PC-9 (cell line): ENCODE measurements at regions of chr1 and their contacts with region 1.

Region 1: DNA sequence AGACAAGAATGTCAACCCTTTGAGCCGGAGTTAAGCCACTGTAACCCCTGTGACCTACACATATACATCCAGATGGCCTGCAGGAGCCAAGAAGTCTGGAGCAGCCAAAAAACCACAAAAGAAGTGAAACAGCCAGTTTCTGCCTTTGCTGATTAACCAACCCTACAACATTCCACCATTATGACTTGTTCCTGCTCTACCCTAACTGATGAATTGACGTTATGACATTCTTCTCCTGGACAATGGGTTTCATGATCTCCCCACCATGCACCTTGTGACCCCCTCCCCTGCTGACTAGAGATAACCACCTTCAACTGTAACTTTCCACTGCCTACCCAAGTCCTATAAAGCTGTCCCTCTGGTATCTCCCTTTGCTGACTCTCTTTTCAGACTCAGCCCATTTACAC is 216.3 kb upstream of the DUSP10 start:
- DNase-seq: peak; percentile 85 to 99
- H3K4me3 ChIP-seq: 0 out of 2 replicates have a peak overlapping the region, but pooled peaks have one; percentile 11
- H3K27ac ChIP-seq: peak overlapping the region; percentile 95
- H3K4me1 ChIP-seq: peaks cover 61% of the 10 kb centered on the region
- H3K27me3 ChIP-seq: no peaks in the 10 kb centered on the region
- CTCF ChIP-seq: no peak

Region 2: GRCh38 chr1:221478050-221478949 is 479.9 kb before region 1 on chr1:
- CTCF ChIA-PET with region 1: no interaction called
- POLR2A ChIA-PET with region 1: no interaction called
- intact Hi-C with region 1: loop called (anchors 5 kb)
- DNase-seq: peak; percentile 74 to 80
- H3K4me3 ChIP-seq: no peak overlapping the region
- H3K27ac ChIP-seq: no peak overlapping the region
- H3K4me1 ChIP-seq: peaks cover 13% of the 10 kb centered on the region
- H3K27me3 ChIP-seq: no peaks in the 10 kb centered on the region
- CTCF ChIP-seq: peak; percentile 79

Region 3: GRCh38 chr1:221809031-221810029 is 148.8 kb before region 1 on chr1:
- CTCF ChIA-PET with region 1: no interaction called
- POLR2A ChIA-PET with region 1: interaction called, 3 read pairs
- intact Hi-C with region 1: loop called (anchors 2 kb)
- DNase-seq: no peak
- H3K4me3 ChIP-seq: no peak overlapping the region
- H3K27ac ChIP-seq: peak overlapping the region; percentile 90
- H3K4me1 ChIP-seq: peaks cover 59% of the 10 kb centered on the region
- H3K27me3 ChIP-seq: no peaks in the 10 kb centered on the region
- CTCF ChIP-seq: no peak

Region 4: DNA sequence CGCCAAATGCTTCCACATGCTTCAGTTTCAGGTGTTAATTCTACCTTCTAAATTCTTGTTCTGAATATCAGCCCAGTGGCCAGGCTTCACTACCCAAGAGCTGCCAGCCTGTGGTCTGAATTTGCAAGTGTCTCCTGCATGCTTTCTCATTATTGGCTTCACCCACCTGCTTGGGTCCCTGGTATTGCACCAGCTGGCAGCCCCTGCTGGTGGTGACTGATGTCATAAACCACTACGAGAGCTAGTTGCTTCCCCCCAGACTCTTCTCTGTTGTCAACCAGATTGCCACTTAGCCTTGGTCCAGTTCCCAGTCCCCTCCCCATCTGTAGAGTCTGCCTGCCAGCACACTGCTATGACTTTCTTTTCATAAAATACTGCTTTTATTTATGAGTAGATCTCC is 18.6 kb before region 1 on chr1:
- CTCF ChIA-PET with region 1: no interaction called
- POLR2A ChIA-PET with region 1: no interaction called
- intact Hi-C with region 1: no loop called
- DNase-seq: no peak
- H3K4me3 ChIP-seq: no peak overlapping the region
- H3K27ac ChIP-seq: no peak overlapping the region
- H3K4me1 ChIP-seq: no peaks in the 10 kb centered on the region
- H3K27me3 ChIP-seq: no peaks in the 10 kb centered on the region
- CTCF ChIP-seq: no peak

Region 5: GRCh38 chr1:221987860-221988520 is 29.8 kb after region 1 on chr1:
- CTCF ChIA-PET with region 1: interaction called, 3 read pairs
- POLR2A ChIA-PET with region 1: no interaction called
- intact Hi-C with region 1: loop called (anchors 1 kb)
- DNase-seq: peak in 1 of 2 experiments; percentile 55
- H3K4me3 ChIP-seq: no peak overlapping the region
- H3K27ac ChIP-seq: peak overlapping the region; percentile 36
- H3K4me1 ChIP-seq: 0 out of 2 replicates have a peak, but pooled peaks cover 9% of the 10 kb centered on the region
- H3K27me3 ChIP-seq: no peaks in the 10 kb centered on the region
- CTCF ChIP-seq: no peak

Region 6: GRCh38 chr1:222009105-222009730 is 51.1 kb after region 1 on chr1:
- CTCF ChIA-PET with region 1: no interaction called
- POLR2A ChIA-PET with region 1: no interaction called
- intact Hi-C with region 1: loop called (anchors 2 kb)
- DNase-seq: peak in 1 of 2 experiments; percentile 19
- H3K4me3 ChIP-seq: no peak overlapping the region
- H3K27ac ChIP-seq: no peak overlapping the region
- H3K4me1 ChIP-seq: peaks cover 4% of the 10 kb centered on the region
- H3K27me3 ChIP-seq: no peaks in the 10 kb centered on the region
- CTCF ChIP-seq: peak; percentile 56

Region 7: GRCh38 chr1:222095606-222096475 is 137.7 kb after region 1 on chr1:
- CTCF ChIA-PET with region 1: no interaction called
- POLR2A ChIA-PET with region 1: no interaction called
- intact Hi-C with region 1: loop called (anchors 5 kb)
- DNase-seq: peak in 1 of 2 experiments; percentile 11
- H3K4me3 ChIP-seq: no peak overlapping the region
- H3K27ac ChIP-seq: no peak overlapping the region
- H3K4me1 ChIP-seq: peaks cover 12% of the 10 kb centered on the region
- H3K27me3 ChIP-seq: no peaks in the 10 kb centered on the region
- CTCF ChIP-seq: peak; percentile 84